Naive thymus-derived CD4-positive, alpha-beta T cell (primary cell): ENCODE measurements at regions of chr21 and their contacts with region 1.

Region 1: DNA sequence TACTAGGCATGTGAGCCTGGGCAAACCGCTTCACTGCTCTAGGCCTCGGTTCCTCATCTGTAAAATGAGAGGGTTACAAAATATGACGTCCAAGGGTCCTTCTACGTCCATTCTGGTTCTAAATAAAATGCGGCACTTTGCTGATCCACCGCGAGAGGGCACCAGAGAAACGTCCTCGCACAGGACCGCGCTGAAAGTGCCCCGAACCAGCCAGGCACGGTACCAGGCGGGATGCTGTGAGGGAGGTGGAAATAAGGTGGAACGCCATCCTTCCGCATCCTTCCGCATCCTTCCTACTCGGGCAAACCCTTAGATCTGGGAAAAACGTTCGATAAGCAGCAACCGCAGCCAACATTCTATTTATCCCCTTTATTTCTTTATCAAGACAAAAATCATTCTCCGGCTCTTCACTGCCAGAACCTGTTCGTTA is 60.3 kb upstream of the KRTAP19-8 start:
- DNase-seq: peak; percentile 44 to 77 (median 62)
- ATAC-seq: peak; percentile 91
- H3K4me3 ChIP-seq: no peak overlapping the region
- H3K4me3 Mint-ChIP-seq: peak overlapping the region in 4 of 10 donors; percentile 15 to 56 (median 46)
- H3K27ac ChIP-seq: no peak overlapping the region
- H3K27ac Mint-ChIP-seq: peak overlapping the region in 1 of 9 donors; percentile 62
- H3K4me1 ChIP-seq: peaks cover 3 to 19% of the 10 kb centered on the region in 2 donors
- H3K4me1 Mint-ChIP-seq: peaks cover 12 to 35% (median 28%) of the 10 kb centered on the region in 7 donors
- H3K27me3 ChIP-seq: no peaks in the 10 kb centered on the region
- H3K27me3 Mint-ChIP-seq: peaks cover 0 to 15% (median 6%) of the 10 kb centered on the region in 5 donors

Region 2: GRCh38 chr21:30769724-30770431 is 328.7 kb before region 1 on chr21:
- CTCF ChIA-PET with region 1: no interaction called
- POLR2A ChIA-PET with region 1: no interaction called
- intact Hi-C with region 1: no loop called
- DNase-seq: no peak
- ATAC-seq: no peak
- H3K4me3 ChIP-seq: no peak overlapping the region
- H3K4me3 Mint-ChIP-seq: no peak overlapping the region
- H3K27ac ChIP-seq: no peak overlapping the region
- H3K27ac Mint-ChIP-seq: no peak overlapping the region
- H3K4me1 ChIP-seq: no peaks in the 10 kb centered on the region
- H3K4me1 Mint-ChIP-seq: no peaks in the 10 kb centered on the region
- H3K27me3 ChIP-seq: no peaks in the 10 kb centered on the region
- H3K27me3 Mint-ChIP-seq: peaks cover 0 to 18% (median 2%) of the 10 kb centered on the region in 5 donors

Region 3: GRCh38 chr21:31064803-31065202 is 33.8 kb before region 1 on chr21:
- CTCF ChIA-PET with region 1: no interaction called
- POLR2A ChIA-PET with region 1: no interaction called
- intact Hi-C with region 1: no loop called
- DNase-seq: no peak
- ATAC-seq: no peak
- H3K4me3 ChIP-seq: no peak overlapping the region
- H3K4me3 Mint-ChIP-seq: no peak overlapping the region
- H3K27ac ChIP-seq: no peak overlapping the region
- H3K27ac Mint-ChIP-seq: no peak overlapping the region
- H3K4me1 ChIP-seq: no peaks in the 10 kb centered on the region
- H3K4me1 Mint-ChIP-seq: peaks cover 0 to 6% (median 0%) of the 10 kb centered on the region in 7 donors
- H3K27me3 ChIP-seq: no peaks in the 10 kb centered on the region
- H3K27me3 Mint-ChIP-seq: peaks cover 0 to 17% (median 5%) of the 10 kb centered on the region in 5 donors

Region 4: GRCh38 chr21:31088315-31088714 is 10.3 kb before region 1 on chr21:
- CTCF ChIA-PET with region 1: interaction called, 10 read pairs
- POLR2A ChIA-PET with region 1: no interaction called
- intact Hi-C with region 1: no loop called
- DNase-seq: peak in 1 of 9 donors; percentile 6
- ATAC-seq: no peak
- H3K4me3 ChIP-seq: no peak overlapping the region
- H3K4me3 Mint-ChIP-seq: peak overlapping the region in 1 of 10 donors; percentile 28
- H3K27ac ChIP-seq: no peak overlapping the region
- H3K27ac Mint-ChIP-seq: peak overlapping the region in 1 of 9 donors; percentile 39
- H3K4me1 ChIP-seq: no peaks in the 10 kb centered on the region
- H3K4me1 Mint-ChIP-seq: peaks cover 0 to 17% (median 9%) of the 10 kb centered on the region in 7 donors
- H3K27me3 ChIP-seq: no peaks in the 10 kb centered on the region
- H3K27me3 Mint-ChIP-seq: peaks cover 0 to 41% (median 4%) of the 10 kb centered on the region in 5 donors

Region 5: GRCh38 chr21:31142600-31142999 is 44.0 kb after region 1 on chr21:
- CTCF ChIA-PET with region 1: interaction called, 13 read pairs
- POLR2A ChIA-PET with region 1: interaction called, 3 read pairs
- intact Hi-C with region 1: loop called (anchors 1 to 2 kb)
- DNase-seq: peak in 7 of 9 donors; percentile 34 to 64 (median 52)
- ATAC-seq: peak; percentile 90
- H3K4me3 ChIP-seq: no peak overlapping the region
- H3K4me3 Mint-ChIP-seq: peak overlapping the region in 1 of 10 donors; percentile 16
- H3K27ac ChIP-seq: no peak overlapping the region
- H3K27ac Mint-ChIP-seq: peak overlapping the region in 2 of 9 donors; percentile 28 to 41
- H3K4me1 ChIP-seq: peaks cover 0 to 20% of the 10 kb centered on the region in 2 donors
- H3K4me1 Mint-ChIP-seq: peaks cover 8 to 70% (median 50%) of the 10 kb centered on the region in 7 donors
- H3K27me3 ChIP-seq: no peaks in the 10 kb centered on the region
- H3K27me3 Mint-ChIP-seq: no peaks in the 10 kb centered on the region

Region 6: GRCh38 chr21:31198575-31198974 is 100.0 kb after region 1 on chr21:
- CTCF ChIA-PET with region 1: interaction called, 6 read pairs
- POLR2A ChIA-PET with region 1: interaction called, 3 read pairs
- intact Hi-C with region 1: loop called (anchors 1 to 5 kb)
- DNase-seq: peak in 5 of 9 donors; percentile 51 to 63 (median 58)
- ATAC-seq: peak; percentile 74
- H3K4me3 ChIP-seq: no peak overlapping the region
- H3K4me3 Mint-ChIP-seq: peak overlapping the region in 3 of 10 donors; percentile 11 to 40 (median 13)
- H3K27ac ChIP-seq: no peak overlapping the region
- H3K27ac Mint-ChIP-seq: no peak overlapping the region
- H3K4me1 ChIP-seq: no peaks in the 10 kb centered on the region
- H3K4me1 Mint-ChIP-seq: peaks cover 14 to 42% (median 36%) of the 10 kb centered on the region in 7 donors
- H3K27me3 ChIP-seq: no peaks in the 10 kb centered on the region
- H3K27me3 Mint-ChIP-seq: no peaks in the 10 kb centered on the region

Region 7: GRCh38 chr21:31604591-31605190 is 506.1 kb after region 1 on chr21:
- CTCF ChIA-PET with region 1: interaction called, 6 read pairs
- POLR2A ChIA-PET with region 1: no interaction called
- intact Hi-C with region 1: loop called (anchors 1 kb)
- DNase-seq: peak; percentile 32 to 71 (median 64)
- ATAC-seq: peak; percentile 83
- H3K4me3 ChIP-seq: no peak overlapping the region
- H3K4me3 Mint-ChIP-seq: no peak overlapping the region
- H3K27ac ChIP-seq: no peak overlapping the region
- H3K27ac Mint-ChIP-seq: no peak overlapping the region
- H3K4me1 ChIP-seq: no peaks in the 10 kb centered on the region
- H3K4me1 Mint-ChIP-seq: peaks cover 0 to 6% (median 0%) of the 10 kb centered on the region in 7 donors
- H3K27me3 ChIP-seq: no peaks in the 10 kb centered on the region
- H3K27me3 Mint-ChIP-seq: peaks cover 0 to 5% (median 0%) of the 10 kb centered on the region in 5 donors